ENCODE measurements at regions of chr5 and their contacts with region 1.

Region 1: DNA sequence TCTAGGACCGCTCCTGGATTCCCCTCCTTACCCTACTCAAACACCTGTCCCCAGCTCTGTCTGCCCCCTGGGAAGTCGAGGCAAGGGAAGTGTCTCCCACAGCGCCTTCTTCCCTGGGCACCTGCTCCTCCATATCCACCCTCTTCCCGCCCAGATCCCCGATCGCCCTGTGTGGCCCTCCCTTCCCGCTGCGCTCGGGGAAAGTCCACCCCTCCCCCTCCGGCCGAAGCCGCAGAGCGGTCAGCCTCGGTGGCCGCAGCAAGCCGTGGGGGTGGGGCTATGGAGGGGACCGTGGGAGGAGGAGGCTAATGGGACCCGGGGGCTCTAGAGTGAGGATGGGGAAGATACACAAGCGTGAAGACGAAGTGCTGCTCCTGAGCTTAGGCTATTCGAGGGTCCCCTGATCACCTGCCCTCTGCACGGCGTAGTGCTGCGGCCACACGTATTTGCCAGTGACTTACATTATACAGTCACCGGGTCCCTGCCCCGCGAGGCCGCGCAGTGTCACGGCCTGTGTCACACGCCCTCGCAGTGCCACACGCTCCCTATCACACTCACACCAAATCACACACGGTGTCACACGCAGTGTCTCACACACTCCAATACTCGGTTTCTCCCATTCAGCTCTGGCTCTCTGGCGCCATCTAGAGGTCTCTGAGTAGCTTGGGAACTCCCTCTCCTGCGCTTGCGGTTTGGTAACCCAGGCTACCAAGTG is 658 bp upstream of the PCDH1 start:
- DNase-seq: peak in 1 of 2 experiments; percentile 92
- H3K4me3 ChIP-seq: peak overlapping the region; percentile 49 to 81 (median 66)
- H3K27ac ChIP-seq: peak overlapping the region; percentile 75
- H3K4me1 ChIP-seq: peaks cover 24 to 64% (median 47%) of the 10 kb centered on the region in 4 experiments
- H3K27me3 ChIP-seq: peaks cover 0 to 4% (median 0%) of the 10 kb centered on the region in 4 experiments; a peak in 1 of 7 replicates
- CTCF ChIP-seq: peak in 2 of 3 experiments; percentile 87 to 98; a peak in 3 of 4 replicates
- EP300 ChIP-seq: no peak
- POLR2A ChIP-seq: no peak; a peak in 1 of 3 replicates
- RAD21 ChIP-seq: peak; percentile 92 to 94

Region 2: GRCh38 chr5:141691867-141692532 is 186.9 kb before region 1 on chr5:
- CTCF ChIA-PET with region 1: interaction called, 124 read pairs
- POLR2A ChIA-PET with region 1: interaction called, 18 read pairs
- DNase-seq: peak in 1 of 2 experiments; percentile 98
- H3K4me3 ChIP-seq: peak overlapping the region; percentile 19 to 60 (median 54); a peak in 7 of 8 replicates
- H3K27ac ChIP-seq: no peak overlapping the region
- H3K4me1 ChIP-seq: peaks cover 4 to 13% (median 9%) of the 10 kb centered on the region in 4 experiments
- H3K27me3 ChIP-seq: peaks cover 0 to 11% (median 2%) of the 10 kb centered on the region in 4 experiments; a peak in 2 of 7 replicates
- CTCF ChIP-seq: peak; percentile 95 to 99 (median 97)
- EP300 ChIP-seq: no peak
- POLR2A ChIP-seq: no peak
- RAD21 ChIP-seq: peak; percentile 98 to 99

Region 3: GRCh38 chr5:141757402-141757801 is 121.5 kb before region 1 on chr5:
- CTCF ChIA-PET with region 1: interaction called, 221 read pairs
- POLR2A ChIA-PET with region 1: interaction called, 15 read pairs
- DNase-seq: peak in 1 of 2 experiments; percentile 29
- H3K4me3 ChIP-seq: no peak overlapping the region
- H3K27ac ChIP-seq: no peak overlapping the region
- H3K4me1 ChIP-seq: peaks cover 17 to 30% (median 26%) of the 10 kb centered on the region in 4 experiments
- H3K27me3 ChIP-seq: peaks cover 9 to 22% (median 18%) of the 10 kb centered on the region in 4 experiments
- CTCF ChIP-seq: peak in 2 of 3 experiments; percentile 78 to 79; a peak in 3 of 4 replicates
- EP300 ChIP-seq: no peak
- POLR2A ChIP-seq: no peak
- RAD21 ChIP-seq: peak; percentile 76 to 86

Region 4: GRCh38 chr5:141800617-141801016 is 78.3 kb before region 1 on chr5:
- CTCF ChIA-PET with region 1: interaction called, 43 read pairs
- POLR2A ChIA-PET with region 1: interaction called, 18 read pairs
- DNase-seq: no peak
- H3K4me3 ChIP-seq: no peak overlapping the region
- H3K27ac ChIP-seq: no peak overlapping the region
- H3K4me1 ChIP-seq: peaks cover 4 to 19% (median 8%) of the 10 kb centered on the region in 4 experiments
- H3K27me3 ChIP-seq: no peaks in the 10 kb centered on the region
- CTCF ChIP-seq: no peak
- EP300 ChIP-seq: no peak
- POLR2A ChIP-seq: no peak
- RAD21 ChIP-seq: no peak

Region 5: DNA sequence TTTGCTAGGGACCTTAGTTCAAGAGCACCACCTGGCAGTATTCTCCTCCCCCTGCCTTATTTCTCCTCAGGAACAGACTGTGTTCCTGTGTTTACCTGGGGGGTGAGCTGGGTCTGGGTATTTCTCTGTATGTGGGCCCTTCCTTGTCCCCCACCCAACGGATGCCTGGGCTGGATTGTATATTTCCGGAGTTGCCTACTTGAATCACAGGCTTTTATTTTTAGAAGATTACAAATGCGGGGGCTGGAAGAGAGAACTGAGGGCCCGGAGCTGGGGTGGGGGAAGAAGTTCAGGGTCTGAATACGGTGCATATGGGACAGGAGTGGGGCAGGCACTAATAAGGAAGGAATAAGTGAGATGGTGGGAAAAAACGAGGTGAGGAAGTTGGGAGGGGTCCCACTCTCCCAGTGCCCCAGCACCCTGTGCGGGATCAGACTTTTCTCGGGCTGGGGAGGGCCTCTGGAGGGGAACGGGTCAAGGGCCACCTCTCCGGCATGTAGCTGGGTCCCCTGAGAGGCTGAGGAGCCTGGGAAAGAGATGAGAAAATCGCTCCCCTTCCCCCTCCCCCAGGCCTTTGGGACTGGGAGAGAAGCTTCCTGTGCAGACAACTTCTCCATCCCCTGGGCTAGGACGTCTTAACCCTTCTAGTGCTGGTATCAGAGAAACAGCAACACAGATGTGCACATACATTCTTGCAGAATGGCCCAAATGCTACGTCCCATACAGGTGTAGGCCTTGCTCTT is 42.8 kb before region 1 on chr5:
- CTCF ChIA-PET with region 1: interaction called, 273 read pairs
- POLR2A ChIA-PET with region 1: interaction called, 47 read pairs
- DNase-seq: no peak
- H3K4me3 ChIP-seq: no peak overlapping the region
- H3K27ac ChIP-seq: 0 out of 2 replicates have a peak overlapping the region, but pooled peaks have one; percentile 14
- H3K4me1 ChIP-seq: peaks cover 31 to 46% (median 43%) of the 10 kb centered on the region in 4 experiments
- H3K27me3 ChIP-seq: no peaks in the 10 kb centered on the region
- CTCF ChIP-seq: no peak
- EP300 ChIP-seq: no peak
- POLR2A ChIP-seq: no peak
- RAD21 ChIP-seq: no peak

Region 6: GRCh38 chr5:141889282-141889871 is 10.5 kb after region 1 on chr5:
- CTCF ChIA-PET with region 1: interaction called, 14 read pairs
- POLR2A ChIA-PET with region 1: interaction called, 3 read pairs
- DNase-seq: no peak
- H3K4me3 ChIP-seq: no peak overlapping the region
- H3K27ac ChIP-seq: no peak overlapping the region
- H3K4me1 ChIP-seq: no peaks in the 10 kb centered on the region
- H3K27me3 ChIP-seq: no peaks in the 10 kb centered on the region
- CTCF ChIP-seq: no peak; a peak in 1 of 4 replicates
- EP300 ChIP-seq: no peak
- POLR2A ChIP-seq: no peak
- RAD21 ChIP-seq: peak; percentile 25 to 49; a peak in 3 of 4 replicates

Region 7: DNA sequence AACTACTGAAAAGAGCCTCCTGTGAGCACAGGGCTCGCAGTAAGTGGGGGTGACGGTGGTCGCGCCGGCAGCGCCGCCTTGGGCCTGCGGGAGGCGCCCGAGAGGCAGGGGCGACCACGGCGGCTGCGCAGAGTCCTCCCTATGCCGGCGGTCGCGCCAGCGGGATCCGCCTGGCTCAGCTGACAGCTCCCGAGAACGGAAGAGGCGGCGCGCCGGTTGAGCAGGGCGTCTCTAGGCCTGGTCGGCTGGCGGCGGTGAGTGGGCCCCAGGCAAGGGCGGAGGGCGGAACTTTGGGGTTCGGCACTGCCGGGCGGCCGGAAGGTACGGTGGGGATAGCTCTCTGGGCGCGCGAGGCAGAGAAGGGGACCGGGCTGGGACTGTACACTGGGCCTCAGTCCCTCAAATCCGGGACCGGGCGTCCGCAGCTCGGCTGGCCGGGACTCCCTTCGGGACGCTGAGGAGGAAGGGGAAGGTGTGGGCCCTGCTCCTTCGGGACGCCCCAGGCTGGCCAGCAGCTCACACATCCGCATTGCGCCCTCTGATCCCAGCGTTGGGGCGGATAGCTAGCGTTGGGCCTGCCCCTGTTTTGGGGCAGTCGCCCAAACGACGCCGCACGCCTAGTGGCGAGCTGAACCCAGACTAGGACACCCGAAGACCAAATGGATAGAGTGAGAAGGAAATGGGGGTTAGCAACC is 90.2 kb after region 1 on chr5 and contains the start of gene RNF14:
- CTCF ChIA-PET with region 1: interaction called, 23 read pairs
- POLR2A ChIA-PET with region 1: interaction called, 3 read pairs
- DNase-seq: peak; percentile 89 to 97
- H3K4me3 ChIP-seq: peak within 1 kb of the TSS; percentile 63 to 77 (median 70)
- H3K27ac ChIP-seq: peak within 1 kb of the TSS; percentile 74
- H3K4me1 ChIP-seq: peaks cover 0 to 6% (median 3%) of the 10 kb centered on the region in 4 experiments; a peak in 3 of 7 replicates
- H3K27me3 ChIP-seq: no peaks in the 10 kb centered on the region
- CTCF ChIP-seq: peak; percentile 87 to 90 (median 88)
- EP300 ChIP-seq: no peak; a peak in 1 of 3 replicates
- POLR2A ChIP-seq: peak in 1 of 2 experiments; percentile 52; a peak in 1 of 3 replicates
- RAD21 ChIP-seq: peak; percentile 19 to 42; a peak in 3 of 4 replicates
- total RNA-seq, gene RNF14: 19.6 and 20.2 TPM in 2 replicates

Region 8: GRCh38 chr5:142024771-142025304 is 146.0 kb after region 1 on chr5:
- CTCF ChIA-PET with region 1: no interaction called
- POLR2A ChIA-PET with region 1: no interaction called
- DNase-seq: peak; percentile 77 to 84
- H3K4me3 ChIP-seq: peak overlapping the region; percentile 10 to 65 (median 56)
- H3K27ac ChIP-seq: no peak overlapping the region
- H3K4me1 ChIP-seq: no peaks in the 10 kb centered on the region
- H3K27me3 ChIP-seq: no peaks in the 10 kb centered on the region
- CTCF ChIP-seq: peak in 1 of 3 experiments; percentile 13; a peak in 1 of 4 replicates
- EP300 ChIP-seq: 0 out of 3 replicates have a peak, but pooled peaks of 1 of the 2 experiments have one; percentile 21
- POLR2A ChIP-seq: peak in 1 of 2 experiments; percentile 70; a peak in 2 of 3 replicates
- RAD21 ChIP-seq: no peak

Region 9: DNA sequence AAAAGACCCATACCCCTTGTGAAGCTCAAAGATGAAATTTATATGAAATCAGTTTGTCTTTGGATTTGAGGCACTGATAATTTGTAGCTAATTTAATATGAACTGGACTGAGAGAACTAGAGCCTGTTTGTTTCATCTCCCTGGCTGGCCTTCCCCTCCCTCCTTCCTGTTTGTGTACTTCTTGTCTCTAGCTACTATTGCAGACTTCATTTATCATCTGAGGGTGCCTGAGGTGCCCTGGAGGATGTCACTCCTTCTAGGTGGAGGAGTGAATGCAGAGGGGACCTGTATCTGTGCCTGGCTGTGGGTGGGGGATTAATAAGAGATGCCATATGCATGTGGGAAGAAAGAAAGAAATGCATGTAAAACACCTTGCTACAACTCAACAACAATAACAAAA is 156.1 kb after region 1 on chr5:
- CTCF ChIA-PET with region 1: no interaction called
- POLR2A ChIA-PET with region 1: no interaction called
- DNase-seq: peak in 1 of 2 experiments; percentile 22
- H3K4me3 ChIP-seq: no peak overlapping the region
- H3K27ac ChIP-seq: no peak overlapping the region
- H3K4me1 ChIP-seq: no peaks in the 10 kb centered on the region
- H3K27me3 ChIP-seq: no peaks in the 10 kb centered on the region
- CTCF ChIP-seq: no peak
- EP300 ChIP-seq: no peak
- POLR2A ChIP-seq: no peak
- RAD21 ChIP-seq: no peak

Measured in H1 (cell line).